ENCODE measurements at regions of chr2 and their contacts with region 1.

Region 1: DNA sequence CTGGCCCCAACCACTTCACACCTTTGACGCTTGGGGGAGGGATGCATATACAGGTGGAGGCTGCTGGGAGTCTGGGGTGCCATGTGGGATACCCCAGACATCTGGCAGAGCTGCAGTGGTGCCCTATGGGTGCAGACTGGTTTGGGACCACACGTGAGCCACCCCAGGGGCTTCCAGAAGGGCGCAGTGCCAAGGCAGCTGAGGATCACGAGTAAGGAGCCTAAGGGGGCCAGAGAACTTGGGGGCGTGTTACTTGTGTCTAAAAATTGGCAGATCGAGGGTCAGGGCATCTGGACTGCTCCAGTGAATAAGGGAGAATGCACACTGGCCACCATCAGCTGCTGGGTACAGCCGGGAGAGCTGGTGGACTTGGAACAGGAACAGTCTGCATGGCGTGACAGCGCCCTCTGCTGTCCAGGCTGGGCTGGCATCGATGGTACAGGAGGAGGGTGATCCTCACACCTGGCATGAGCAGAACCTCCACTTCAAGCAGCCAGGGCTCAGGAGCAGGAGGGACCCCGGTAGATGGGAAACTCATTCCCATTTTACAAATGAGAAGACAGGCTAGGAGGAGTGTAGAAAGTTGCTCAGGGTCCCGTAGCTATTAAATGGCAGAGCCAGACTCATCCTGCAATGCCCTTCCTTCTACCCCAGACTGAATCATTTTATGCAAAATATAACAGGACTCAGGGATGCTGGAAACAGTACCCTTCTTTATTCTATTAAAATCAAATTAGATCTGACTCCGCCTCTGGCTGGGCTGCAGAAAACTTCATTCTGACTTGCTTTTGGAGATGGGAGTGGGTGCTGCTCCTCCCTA is 60.4 kb downstream of the ATOH8 start:
- DNase-seq: peak; percentile 90
- CTCF ChIP-seq: peak; percentile 98

Region 2: GRCh38 chr2:85737481-85737880 is 76.7 kb before region 1 on chr2:
- in situ Hi-C with region 1: loop called (anchors 5 kb)
- DNase-seq: no peak
- CTCF ChIP-seq: no peak

Region 3: DNA sequence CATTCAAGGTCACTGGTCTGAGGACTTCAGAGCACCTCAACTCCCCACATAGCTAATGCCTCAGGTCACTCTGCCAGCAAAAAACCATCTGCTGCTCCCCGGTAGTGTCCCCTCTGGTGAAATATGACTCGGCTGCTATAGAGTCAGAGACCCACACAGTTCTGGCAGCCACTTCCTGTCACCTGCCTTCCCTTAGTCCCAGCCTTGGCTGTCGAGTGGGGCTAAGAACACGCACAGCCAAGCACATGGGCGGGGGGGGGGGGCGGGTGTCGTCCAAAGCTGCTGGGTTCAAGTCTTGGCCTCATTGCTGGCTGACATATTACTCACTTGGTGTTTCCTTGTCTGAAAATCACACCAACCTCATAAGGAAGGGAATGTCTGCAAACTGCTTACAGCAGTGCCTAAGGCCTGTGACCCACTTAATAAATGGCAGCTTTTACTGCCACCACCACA is 254.0 kb after region 1 on chr2:
- in situ Hi-C with region 1: no loop called
- DNase-seq: peak; percentile 53
- CTCF ChIP-seq: no peak